ENCODE measurements at regions of chr5 and their contacts with region 1.

Region 1: DNA sequence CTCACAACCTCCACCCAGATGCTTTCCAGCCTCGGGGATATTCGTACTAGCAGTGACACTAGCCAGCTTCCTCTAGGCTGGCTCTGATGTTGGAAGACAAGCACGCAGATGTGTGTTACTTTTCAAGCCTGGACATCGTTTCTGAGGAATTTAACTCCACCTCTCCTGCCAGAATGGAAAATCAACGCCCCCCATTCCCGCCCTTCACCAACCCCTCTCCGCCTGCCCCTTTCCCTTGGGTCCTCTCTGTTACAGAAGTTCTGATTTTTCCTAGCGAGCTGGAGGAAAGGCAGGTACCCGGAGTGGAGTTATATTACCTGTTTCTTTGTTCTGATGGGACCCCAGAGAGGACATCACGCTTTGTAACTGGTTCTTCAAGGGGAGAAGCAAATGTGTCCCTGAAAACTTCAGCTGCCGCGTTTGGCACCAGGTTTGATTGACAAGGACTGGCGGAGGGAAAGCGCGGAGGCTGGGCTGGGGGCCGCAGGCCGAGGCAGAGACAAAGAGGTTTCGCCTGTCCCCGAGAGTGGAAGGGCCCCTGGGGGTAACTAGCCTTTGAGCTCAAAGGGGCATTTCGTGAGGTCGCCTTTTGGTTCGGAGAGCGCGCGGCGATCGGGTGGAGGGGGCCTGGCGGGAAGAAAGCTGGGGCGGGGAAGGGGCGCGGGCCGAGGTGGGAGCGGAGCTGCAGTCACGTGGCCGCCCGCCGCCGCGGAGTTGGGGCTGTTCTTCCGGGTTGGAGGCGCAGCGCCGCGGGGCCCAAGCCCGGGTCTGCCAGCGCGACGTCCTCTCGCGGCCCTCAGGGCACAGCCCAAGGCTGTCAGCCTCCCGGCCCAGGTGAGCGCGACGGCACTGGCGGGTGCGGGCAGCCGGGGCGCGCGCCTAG is at the start of gene NNT:
- DNase-seq: peak; percentile 83
- ATAC-seq: peak; percentile 71
- H3K4me3 ChIP-seq: peak within 1 kb of the TSS; percentile 65 to 99 (median 80)
- H3K4me3 Mint-ChIP-seq: peak within 1 kb of the TSS; percentile 95
- H3K27ac ChIP-seq: peak within 1 kb of the TSS; percentile 75 to 89
- H3K27ac Mint-ChIP-seq: peak within 1 kb of the TSS; percentile 91
- H3K4me1 ChIP-seq: peaks cover 16 to 24% of the 10 kb centered on the region in 2 donors
- H3K4me1 Mint-ChIP-seq: peaks cover 34% of the 10 kb centered on the region
- H3K27me3 ChIP-seq: no peaks in the 10 kb centered on the region
- H3K27me3 Mint-ChIP-seq: no peaks in the 10 kb centered on the region
- CTCF ChIP-seq: no peak
- total RNA-seq, gene NNT: 61.1 and 63.0 TPM in 2 replicates

Region 2: GRCh38 chr5:43396762-43397304 is 205.9 kb before region 1 on chr5:
- CTCF ChIA-PET with region 1: no interaction called
- POLR2A ChIA-PET with region 1: no interaction called
- intact Hi-C with region 1: loop called (anchors 1 kb)
- DNase-seq: peak; percentile 82
- ATAC-seq: peak; percentile 96
- H3K4me3 ChIP-seq: peak overlapping the region; percentile 65 to 89 (median 77)
- H3K4me3 Mint-ChIP-seq: peak overlapping the region; percentile 95
- H3K27ac ChIP-seq: peak overlapping the region; percentile 81 to 83
- H3K27ac Mint-ChIP-seq: peak overlapping the region; percentile 93
- H3K4me1 ChIP-seq: peaks cover 9 to 10% of the 10 kb centered on the region in 2 donors
- H3K4me1 Mint-ChIP-seq: peaks cover 21% of the 10 kb centered on the region
- H3K27me3 ChIP-seq: no peaks in the 10 kb centered on the region
- H3K27me3 Mint-ChIP-seq: no peaks in the 10 kb centered on the region
- CTCF ChIP-seq: no peak

Region 3: GRCh38 chr5:43514816-43515677 is 87.7 kb before region 1 on chr5 and contains the start of gene C5orf34:
- CTCF ChIA-PET with region 1: no interaction called
- POLR2A ChIA-PET with region 1: interaction called, 4 read pairs
- intact Hi-C with region 1: loop called (anchors 1 kb)
- DNase-seq: peak; percentile 93
- ATAC-seq: peak; percentile 99
- H3K4me3 ChIP-seq: peak within 1 kb of the TSS; percentile 78 to 93 (median 88)
- H3K4me3 Mint-ChIP-seq: peak within 1 kb of the TSS; percentile 94
- H3K27ac ChIP-seq: peak within 1 kb of the TSS; percentile 85 to 93
- H3K27ac Mint-ChIP-seq: peak within 1 kb of the TSS; percentile 88
- H3K4me1 ChIP-seq: peaks cover 12 to 18% of the 10 kb centered on the region in 2 donors
- H3K4me1 Mint-ChIP-seq: peaks cover 23% of the 10 kb centered on the region
- H3K27me3 ChIP-seq: no peaks in the 10 kb centered on the region
- H3K27me3 Mint-ChIP-seq: no peaks in the 10 kb centered on the region
- CTCF ChIP-seq: no peak
- total RNA-seq, gene C5orf34: 5.1 and 5.5 TPM in 2 replicates

Region 4: DNA sequence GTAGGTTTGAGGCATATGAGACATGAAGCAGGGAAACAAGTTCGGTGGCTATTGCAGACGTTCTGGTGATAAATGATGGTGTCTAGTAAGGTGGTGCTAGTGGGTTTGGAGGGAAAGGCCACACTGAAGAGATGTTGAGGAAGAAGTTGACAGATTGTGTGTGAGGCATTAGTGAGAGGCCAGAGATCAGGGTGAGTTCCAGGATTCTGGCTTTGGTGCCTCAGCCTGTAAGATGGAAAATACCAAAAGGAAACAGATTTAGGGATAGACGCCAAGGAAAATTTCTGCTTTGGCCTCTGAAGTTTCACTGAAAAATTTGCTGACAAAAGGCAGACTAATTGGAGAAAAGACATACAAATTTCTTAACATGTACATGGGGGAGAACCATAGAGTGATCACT is 39.4 kb before region 1 on chr5:
- CTCF ChIA-PET with region 1: no interaction called
- POLR2A ChIA-PET with region 1: no interaction called
- intact Hi-C with region 1: no loop called
- DNase-seq: no peak
- ATAC-seq: no peak
- H3K4me3 ChIP-seq: no peak overlapping the region
- H3K4me3 Mint-ChIP-seq: no peak overlapping the region
- H3K27ac ChIP-seq: no peak overlapping the region
- H3K27ac Mint-ChIP-seq: no peak overlapping the region
- H3K4me1 ChIP-seq: no peaks in the 10 kb centered on the region
- H3K4me1 Mint-ChIP-seq: no peaks in the 10 kb centered on the region
- H3K27me3 ChIP-seq: no peaks in the 10 kb centered on the region
- H3K27me3 Mint-ChIP-seq: no peaks in the 10 kb centered on the region
- CTCF ChIP-seq: no peak

Region 5: DNA sequence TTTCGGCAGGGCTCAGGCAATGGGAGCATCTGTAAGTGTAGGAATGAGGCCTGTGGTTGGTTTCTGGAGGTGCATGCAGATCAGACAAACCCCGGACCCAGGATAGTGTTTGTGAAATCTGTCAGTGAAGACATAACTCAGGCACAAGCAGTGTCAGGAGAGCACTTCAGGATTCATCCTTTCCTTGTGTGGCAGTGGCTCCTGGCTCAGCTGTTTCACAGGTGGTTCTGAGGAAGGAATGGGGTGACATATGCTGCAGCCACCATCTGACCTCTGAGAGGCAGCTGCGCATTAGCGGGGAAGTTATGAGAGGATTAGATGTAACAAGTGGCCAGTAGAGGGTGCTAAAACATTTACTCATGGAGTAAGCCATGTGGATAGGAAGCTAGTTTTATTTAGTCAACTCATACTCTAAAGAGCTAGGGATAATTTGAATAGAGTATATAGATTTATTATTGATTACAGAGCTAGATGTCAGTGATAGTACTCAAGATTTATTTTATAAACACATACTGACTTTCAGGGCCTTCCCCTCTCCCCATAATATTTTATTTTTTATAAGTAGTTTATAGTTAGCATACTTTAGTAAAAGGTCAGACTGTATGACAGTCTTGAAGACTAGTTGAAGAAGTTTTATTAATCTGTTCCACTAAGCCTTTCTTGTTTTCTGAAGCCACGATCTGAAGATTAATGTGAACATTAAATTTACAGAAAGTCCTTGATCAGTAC is 28.6 kb after region 1 on chr5:
- CTCF ChIA-PET with region 1: interaction called, 27 read pairs
- POLR2A ChIA-PET with region 1: interaction called, 3 read pairs
- intact Hi-C with region 1: no loop called
- DNase-seq: peak; percentile 63
- ATAC-seq: peak; percentile 67
- H3K4me3 ChIP-seq: no peak overlapping the region
- H3K4me3 Mint-ChIP-seq: no peak overlapping the region
- H3K27ac ChIP-seq: no peak overlapping the region
- H3K27ac Mint-ChIP-seq: no peak overlapping the region
- H3K4me1 ChIP-seq: no peaks in the 10 kb centered on the region
- H3K4me1 Mint-ChIP-seq: peaks cover 2% of the 10 kb centered on the region
- H3K27me3 ChIP-seq: no peaks in the 10 kb centered on the region
- H3K27me3 Mint-ChIP-seq: no peaks in the 10 kb centered on the region
- CTCF ChIP-seq: peak; percentile 71

Region 6: GRCh38 chr5:43859309-43859708 is 256.6 kb after region 1 on chr5:
- CTCF ChIA-PET with region 1: no interaction called
- POLR2A ChIA-PET with region 1: no interaction called
- intact Hi-C with region 1: no loop called
- DNase-seq: no peak
- ATAC-seq: no peak
- H3K4me3 ChIP-seq: no peak overlapping the region
- H3K4me3 Mint-ChIP-seq: no peak overlapping the region
- H3K27ac ChIP-seq: no peak overlapping the region
- H3K27ac Mint-ChIP-seq: no peak overlapping the region
- H3K4me1 ChIP-seq: no peaks in the 10 kb centered on the region
- H3K4me1 Mint-ChIP-seq: no peaks in the 10 kb centered on the region
- H3K27me3 ChIP-seq: no peaks in the 10 kb centered on the region
- H3K27me3 Mint-ChIP-seq: no peaks in the 10 kb centered on the region
- CTCF ChIP-seq: no peak

Region 7: GRCh38 chr5:44808435-44809214 is 1205.9 kb after region 1 on chr5 and contains the start of gene MRPS30:
- CTCF ChIA-PET with region 1: no interaction called
- POLR2A ChIA-PET with region 1: no interaction called
- intact Hi-C with region 1: loop called (anchors 1 kb)
- DNase-seq: peak; percentile 97
- ATAC-seq: peak; percentile 96
- H3K4me3 ChIP-seq: peak within 1 kb of the TSS; percentile 50 to 96 (median 87)
- H3K4me3 Mint-ChIP-seq: peak within 1 kb of the TSS; percentile 86
- H3K27ac ChIP-seq: peak within 1 kb of the TSS; percentile 71 to 84
- H3K27ac Mint-ChIP-seq: peak within 1 kb of the TSS; percentile 88
- H3K4me1 ChIP-seq: peaks cover 11 to 13% of the 10 kb centered on the region in 2 donors
- H3K4me1 Mint-ChIP-seq: peaks cover 30% of the 10 kb centered on the region
- H3K27me3 ChIP-seq: no peaks in the 10 kb centered on the region
- H3K27me3 Mint-ChIP-seq: no peaks in the 10 kb centered on the region
- CTCF ChIP-seq: peak; percentile 45
- total RNA-seq, gene MRPS30: 46.1 and 50.2 TPM in 2 replicates

Region 8: DNA sequence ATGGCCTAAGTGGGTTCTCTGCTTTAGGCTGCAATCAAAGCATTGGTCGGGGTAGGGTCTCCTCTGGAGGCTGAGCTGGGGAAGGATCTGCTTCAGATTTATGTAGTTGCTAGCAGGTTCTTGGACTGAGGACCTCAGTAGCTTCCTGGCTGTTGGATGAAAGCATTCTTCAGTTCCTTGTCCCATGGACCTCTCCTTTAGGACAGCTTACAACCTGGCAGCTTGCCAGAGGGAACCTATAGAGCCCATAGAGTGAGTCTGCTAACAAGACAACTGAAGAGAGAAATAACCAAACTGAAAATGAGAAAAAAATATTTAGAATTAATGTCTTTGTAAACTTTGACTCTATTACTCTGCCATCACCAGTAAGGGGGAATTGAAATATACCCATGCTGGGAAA is 1218.5 kb after region 1 on chr5:
- CTCF ChIA-PET with region 1: no interaction called
- POLR2A ChIA-PET with region 1: no interaction called
- intact Hi-C with region 1: no loop called
- DNase-seq: no peak
- ATAC-seq: no peak
- H3K4me3 ChIP-seq: no peak overlapping the region
- H3K4me3 Mint-ChIP-seq: no peak overlapping the region
- H3K27ac ChIP-seq: no peak overlapping the region
- H3K27ac Mint-ChIP-seq: no peak overlapping the region
- H3K4me1 ChIP-seq: no peaks in the 10 kb centered on the region
- H3K4me1 Mint-ChIP-seq: no peaks in the 10 kb centered on the region
- H3K27me3 ChIP-seq: no peaks in the 10 kb centered on the region
- H3K27me3 Mint-ChIP-seq: no peaks in the 10 kb centered on the region
- CTCF ChIP-seq: no peak

Measured in B cell (primary cell).